OCI-LY7 (cell line): ENCODE measurements at regions of chr10 and their contacts with region 1.

Region 1: DNA sequence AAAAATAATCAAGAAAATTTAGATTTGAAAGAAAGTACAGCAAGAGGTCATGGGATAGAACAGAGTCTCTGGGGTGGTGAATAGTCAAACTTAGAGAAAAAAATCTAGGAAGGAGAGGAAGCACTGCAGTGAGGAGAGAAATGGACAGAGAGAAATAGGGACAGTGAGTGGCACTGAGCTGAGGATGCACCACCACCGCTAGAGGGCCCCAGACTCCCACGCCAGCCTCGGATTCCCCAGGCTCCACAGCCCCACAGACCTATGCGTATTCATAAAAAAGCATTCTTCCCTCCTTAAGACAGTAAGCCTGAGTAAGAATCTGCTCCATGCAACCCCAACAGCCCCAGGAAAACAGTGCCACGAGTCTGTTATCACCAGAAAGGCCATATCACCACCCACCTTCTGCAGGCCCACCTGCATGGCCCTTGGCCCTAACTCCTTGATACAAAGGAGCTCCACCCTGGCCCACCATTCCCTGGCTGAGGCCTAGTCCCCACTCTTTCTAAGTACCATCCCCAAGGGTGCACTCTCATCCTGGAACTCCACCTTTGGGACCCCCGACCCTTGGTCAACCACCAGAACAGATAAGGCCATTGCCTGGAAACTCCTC is 91.0 kb downstream of the ALOX5 start:
- DNase-seq: peak; percentile 82
- H3K4me3 ChIP-seq: peak overlapping the region; percentile 69
- H3K27ac ChIP-seq: peak overlapping the region; percentile 95
- H3K4me1 ChIP-seq: peaks cover 67% of the 10 kb centered on the region
- CTCF ChIP-seq: peak; percentile 98

Region 2: DNA sequence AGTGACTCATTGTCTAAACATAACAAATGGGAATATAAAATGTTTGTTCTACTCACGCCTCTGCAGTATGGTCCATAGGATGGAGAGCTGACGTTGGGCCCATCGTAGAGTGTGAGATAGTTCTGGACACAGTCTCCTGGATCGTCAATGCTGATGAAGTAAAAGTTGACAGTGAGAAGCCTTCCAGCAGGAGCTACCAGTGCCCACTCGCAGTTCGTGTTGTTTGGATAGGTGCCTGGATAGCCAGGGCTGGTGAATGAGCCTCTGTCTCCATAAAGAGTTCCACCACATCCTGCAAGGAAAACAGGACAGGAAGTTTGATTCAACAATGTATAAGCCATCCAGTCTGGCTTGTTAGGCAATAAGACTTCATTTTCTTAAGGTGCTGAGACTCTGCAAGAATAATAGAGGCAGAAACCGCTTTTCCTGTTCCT is 229.2 kb before region 1 on chr10:
- CTCF ChIA-PET with region 1: no interaction called
- POLR2A ChIA-PET with region 1: no interaction called
- intact Hi-C with region 1: loop called (anchors 5 kb)
- DNase-seq: no peak
- H3K4me3 ChIP-seq: no peak overlapping the region
- H3K27ac ChIP-seq: no peak overlapping the region
- H3K4me1 ChIP-seq: no peaks in the 10 kb centered on the region
- CTCF ChIP-seq: no peak

Region 3: GRCh38 chr10:45373576-45374349 is 91.3 kb before region 1 on chr10 and contains the start of gene ALOX5:
- CTCF ChIA-PET with region 1: no interaction called
- POLR2A ChIA-PET with region 1: interaction called, 31 read pairs
- intact Hi-C with region 1: loop called (anchors 1 kb)
- DNase-seq: peak; percentile 88
- H3K4me3 ChIP-seq: peak within 1 kb of the TSS; percentile 89
- H3K27ac ChIP-seq: peak within 1 kb of the TSS; percentile 98
- H3K4me1 ChIP-seq: peaks cover 63% of the 10 kb centered on the region
- CTCF ChIP-seq: no peak
- total RNA-seq, gene ALOX5: 146 and 164 TPM in 2 replicates

Region 4: GRCh38 chr10:45483002-45483401 is 17.9 kb after region 1 on chr10:
- CTCF ChIA-PET with region 1: no interaction called
- POLR2A ChIA-PET with region 1: no interaction called
- intact Hi-C with region 1: no loop called
- DNase-seq: no peak
- H3K4me3 ChIP-seq: no peak overlapping the region
- H3K27ac ChIP-seq: no peak overlapping the region
- H3K4me1 ChIP-seq: no peaks in the 10 kb centered on the region
- CTCF ChIP-seq: no peak

Region 5: DNA sequence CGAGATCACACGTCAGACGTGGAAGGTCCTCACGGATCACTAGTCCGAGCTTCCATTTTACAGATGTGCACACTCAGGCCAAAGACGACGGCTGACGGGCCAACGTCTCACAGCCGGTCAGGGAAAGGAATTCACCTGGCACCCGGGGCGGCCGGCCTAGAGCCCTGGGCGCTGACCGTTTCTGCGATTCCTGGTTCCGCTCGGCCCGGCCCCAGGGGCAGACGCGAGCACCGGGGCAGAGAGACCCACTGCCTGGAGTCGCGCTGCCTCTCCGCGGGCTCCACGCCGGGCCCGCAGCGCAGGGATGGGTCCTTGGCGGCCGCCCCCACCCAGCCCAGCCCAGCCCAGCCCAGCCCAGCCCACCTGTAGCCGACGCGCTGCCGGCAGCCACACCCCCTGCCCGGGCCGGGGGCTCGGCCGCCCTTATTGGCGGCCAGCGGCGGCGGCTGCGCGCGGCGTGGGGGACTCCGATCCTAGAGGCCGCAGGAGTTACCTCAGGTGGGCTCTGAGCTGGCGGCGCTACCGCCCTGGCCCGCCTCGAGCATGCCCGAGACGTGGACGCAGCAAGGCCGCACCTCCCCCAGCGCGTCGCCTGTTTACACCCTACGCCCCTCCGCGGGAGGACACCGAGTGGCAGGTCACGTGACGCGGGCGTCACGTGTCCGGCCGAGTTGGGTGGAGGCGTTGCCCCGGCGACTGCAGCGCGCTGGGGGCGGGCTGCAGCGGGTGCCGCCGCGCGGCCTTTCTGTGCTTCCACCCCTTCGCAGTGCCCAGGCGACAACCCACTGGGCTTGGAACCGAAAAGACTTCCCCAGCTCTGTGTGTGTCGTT is 129.4 kb after region 1 on chr10:
- CTCF ChIA-PET with region 1: no interaction called
- POLR2A ChIA-PET with region 1: no interaction called
- intact Hi-C with region 1: loop called (anchors 2 kb)
- DNase-seq: peak; percentile 98
- H3K4me3 ChIP-seq: peak overlapping the region; percentile 88
- H3K27ac ChIP-seq: no peak overlapping the region
- H3K4me1 ChIP-seq: peaks cover 28% of the 10 kb centered on the region
- CTCF ChIP-seq: peak; percentile 32; the same call in 1 of the 2 replicates